AG04449 (cell line): ENCODE measurements at regions of chr20 and their contacts with region 1.

Region 1: DNA sequence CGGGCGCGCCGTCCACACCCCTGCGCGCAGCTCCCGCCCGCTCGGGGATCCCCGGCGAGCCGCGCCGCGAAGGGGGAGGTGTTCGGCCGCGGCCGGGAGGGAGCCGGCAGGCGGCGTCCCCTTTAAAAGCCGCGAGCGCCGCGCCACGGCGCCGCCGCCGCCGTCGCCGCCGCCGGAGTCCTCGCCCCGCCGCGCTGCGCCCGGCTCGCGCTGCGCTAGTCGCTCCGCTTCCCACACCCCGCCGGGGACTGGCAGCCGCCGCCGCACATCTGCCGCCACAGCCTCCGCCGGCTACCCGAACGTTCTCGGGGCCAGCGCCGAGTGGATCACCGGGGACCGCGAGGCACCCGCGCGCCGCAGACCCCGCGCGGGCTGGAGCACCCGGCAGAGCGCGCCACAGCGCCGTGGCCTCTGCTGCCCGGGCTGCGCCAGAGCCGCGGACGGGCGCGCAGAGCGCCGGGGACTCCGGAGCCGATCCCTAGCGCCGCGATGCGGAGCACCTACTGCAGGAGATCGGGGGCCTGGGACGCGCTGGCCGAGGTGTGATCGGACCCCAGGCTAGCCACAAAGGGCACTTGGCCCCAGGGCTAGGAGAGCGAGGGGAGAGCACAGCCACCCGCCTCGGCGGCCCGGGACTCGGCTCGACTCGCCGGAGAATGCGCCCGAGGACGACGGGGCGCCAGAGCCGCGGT is at the start of gene BMP2:
- DNase-seq: no peak
- H3K4me3 ChIP-seq: peak within 1 kb of the TSS; percentile 58
- CTCF ChIP-seq: no peak

Region 2: DNA sequence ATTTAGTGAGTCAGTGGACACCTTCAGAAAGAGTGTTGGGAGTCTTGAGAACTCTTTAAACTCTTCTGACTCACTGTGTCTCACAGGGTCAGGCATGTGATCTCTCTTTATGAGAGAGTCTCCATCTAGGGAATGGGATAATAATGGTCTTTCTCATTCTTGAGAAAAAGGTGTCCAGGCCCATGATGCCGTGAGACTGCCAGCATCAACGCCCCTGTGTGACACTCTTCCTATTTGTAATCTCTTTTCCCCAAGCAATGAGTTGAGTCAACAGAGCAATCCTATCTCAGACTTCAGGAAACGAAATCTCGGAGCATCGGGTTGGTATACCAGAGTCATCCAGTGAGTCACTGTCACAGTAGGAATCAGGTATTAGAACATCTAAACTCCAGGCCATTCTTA is 82.5 kb before region 1 on chr20:
- CTCF ChIA-PET with region 1: no interaction called
- POLR2A ChIA-PET with region 1: no interaction called
- DNase-seq: no peak
- H3K4me3 ChIP-seq: no peak overlapping the region
- CTCF ChIP-seq: no peak

Region 3: GRCh38 chr20:6756693-6757595 is 10.7 kb before region 1 on chr20:
- CTCF ChIA-PET with region 1: interaction called, 10 read pairs
- POLR2A ChIA-PET with region 1: no interaction called
- DNase-seq: no peak
- H3K4me3 ChIP-seq: no peak overlapping the region
- CTCF ChIP-seq: no peak

Region 4: DNA sequence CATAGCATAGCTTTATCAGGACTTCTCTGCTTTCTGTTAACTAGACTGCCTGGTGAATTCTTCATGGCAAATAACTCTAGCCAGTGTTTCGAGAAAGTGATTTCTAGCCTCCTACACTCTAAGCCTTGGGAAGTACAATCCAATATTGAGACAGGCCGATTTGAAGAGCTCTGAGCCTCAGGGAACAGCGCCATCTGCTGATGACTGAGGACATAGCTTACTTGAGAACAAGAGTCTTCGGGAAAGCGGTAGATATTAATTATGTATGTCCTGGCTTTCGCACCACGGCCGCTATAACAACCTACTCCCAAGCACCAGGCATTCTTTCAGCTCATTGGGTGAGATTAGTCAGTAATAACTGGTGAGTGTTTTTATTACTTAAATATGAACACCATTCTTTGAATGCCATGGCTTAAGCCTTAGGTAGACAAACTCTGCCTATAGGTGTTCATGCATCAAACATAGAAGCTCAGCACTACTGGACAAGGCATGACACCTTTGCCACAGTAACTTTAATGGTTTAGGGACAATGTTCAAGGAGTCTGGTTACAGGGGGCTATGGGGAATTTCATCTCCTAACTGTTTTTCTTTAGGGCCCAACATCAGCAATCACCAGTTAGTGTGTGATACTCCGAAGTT is 518.4 kb after region 1 on chr20:
- CTCF ChIA-PET with region 1: interaction called, 10 read pairs
- POLR2A ChIA-PET with region 1: no interaction called
- DNase-seq: peak; percentile 24
- H3K4me3 ChIP-seq: no peak overlapping the region
- CTCF ChIP-seq: peak; percentile 78

Region 5: DNA sequence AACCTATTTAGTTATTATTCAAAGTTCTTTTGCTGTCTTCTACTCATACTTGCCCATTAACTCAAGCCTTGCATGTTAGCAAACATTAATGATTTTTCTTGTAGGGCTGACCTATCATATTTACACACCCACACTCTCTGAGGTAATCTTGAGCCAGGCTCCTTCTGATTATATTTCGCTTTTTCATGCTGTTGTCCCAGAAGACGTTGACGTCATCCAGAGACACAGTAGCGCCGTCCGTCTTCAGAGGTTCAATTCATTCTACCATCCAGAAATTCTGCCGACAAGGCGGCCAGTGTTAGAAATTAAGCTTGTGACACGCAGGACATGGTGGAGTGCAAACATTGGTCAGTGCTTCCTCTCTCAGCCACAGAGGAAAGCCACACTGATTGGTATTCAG is 584.5 kb after region 1 on chr20:
- CTCF ChIA-PET with region 1: no interaction called
- POLR2A ChIA-PET with region 1: no interaction called
- DNase-seq: no peak
- H3K4me3 ChIP-seq: no peak overlapping the region
- CTCF ChIP-seq: no peak

Region 6: GRCh38 chr20:7859356-7859802 is 1091.7 kb after region 1 on chr20:
- CTCF ChIA-PET with region 1: interaction called, 25 read pairs
- POLR2A ChIA-PET with region 1: no interaction called
- DNase-seq: no peak
- H3K4me3 ChIP-seq: no peak overlapping the region
- CTCF ChIP-seq: peak; percentile 65

Region 7: DNA sequence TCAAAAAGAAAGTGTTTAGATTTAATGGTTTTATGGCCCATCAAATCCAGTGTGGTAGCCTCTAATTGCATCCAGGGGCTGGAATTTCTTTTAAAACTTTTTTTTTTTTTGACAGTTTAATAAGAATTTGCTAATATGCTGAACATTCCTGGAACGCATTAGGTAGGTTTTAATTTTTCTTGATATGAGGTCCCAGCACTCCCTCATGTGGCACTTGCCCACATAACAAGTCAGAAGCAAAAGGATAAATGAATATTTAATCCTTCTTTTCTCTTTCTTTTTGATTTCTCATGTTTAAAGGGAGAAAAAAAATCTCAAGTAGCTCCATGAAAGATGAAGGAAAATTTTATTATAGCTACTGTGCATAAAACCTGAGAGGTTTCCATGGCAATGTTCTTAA is 1159.1 kb after region 1 on chr20:
- CTCF ChIA-PET with region 1: interaction called, 12 read pairs
- POLR2A ChIA-PET with region 1: no interaction called
- DNase-seq: peak; percentile 10
- H3K4me3 ChIP-seq: no peak overlapping the region
- CTCF ChIP-seq: peak; percentile 45